ENCODE measurements at regions of chr2 and their contacts with region 1.

Region 1: GRCh38 chr2:175167792-175168563 is at the start of gene ATF2:
- DNase-seq: peak; percentile 74 to 98 (median 96)
- H3K4me3 ChIP-seq: peak within 1 kb of the TSS; percentile 49 to 100 (median 95)
- H3K27ac ChIP-seq: peak within 1 kb of the TSS; percentile 64 to 99 (median 94)
- H3K27me3 ChIP-seq: no peaks in the 10 kb centered on the region
- CTCF ChIP-seq: peak in 21 of 56 donors; percentile 3 to 34 (median 15)
- total RNA-seq, gene ATF2: 70.3 to 129 (median 104) TPM

Region 2: GRCh38 chr2:174529923-174530322 is 638.1 kb before region 1 on chr2:
- intact Hi-C with region 1: no loop called
- DNase-seq: no peak
- H3K4me3 ChIP-seq: no peak overlapping the region
- H3K27ac ChIP-seq: no peak overlapping the region
- H3K27me3 ChIP-seq: no peaks in the 10 kb centered on the region
- CTCF ChIP-seq: no peak

Region 3: GRCh38 chr2:175111200-175111657 is 56.7 kb before region 1 on chr2:
- intact Hi-C with region 1: no loop called
- DNase-seq: no peak
- H3K4me3 ChIP-seq: no peak overlapping the region
- H3K27ac ChIP-seq: no peak overlapping the region
- H3K27me3 ChIP-seq: no peaks in the 10 kb centered on the region
- CTCF ChIP-seq: peak; percentile 49 to 84 (median 77)

Region 4: DNA sequence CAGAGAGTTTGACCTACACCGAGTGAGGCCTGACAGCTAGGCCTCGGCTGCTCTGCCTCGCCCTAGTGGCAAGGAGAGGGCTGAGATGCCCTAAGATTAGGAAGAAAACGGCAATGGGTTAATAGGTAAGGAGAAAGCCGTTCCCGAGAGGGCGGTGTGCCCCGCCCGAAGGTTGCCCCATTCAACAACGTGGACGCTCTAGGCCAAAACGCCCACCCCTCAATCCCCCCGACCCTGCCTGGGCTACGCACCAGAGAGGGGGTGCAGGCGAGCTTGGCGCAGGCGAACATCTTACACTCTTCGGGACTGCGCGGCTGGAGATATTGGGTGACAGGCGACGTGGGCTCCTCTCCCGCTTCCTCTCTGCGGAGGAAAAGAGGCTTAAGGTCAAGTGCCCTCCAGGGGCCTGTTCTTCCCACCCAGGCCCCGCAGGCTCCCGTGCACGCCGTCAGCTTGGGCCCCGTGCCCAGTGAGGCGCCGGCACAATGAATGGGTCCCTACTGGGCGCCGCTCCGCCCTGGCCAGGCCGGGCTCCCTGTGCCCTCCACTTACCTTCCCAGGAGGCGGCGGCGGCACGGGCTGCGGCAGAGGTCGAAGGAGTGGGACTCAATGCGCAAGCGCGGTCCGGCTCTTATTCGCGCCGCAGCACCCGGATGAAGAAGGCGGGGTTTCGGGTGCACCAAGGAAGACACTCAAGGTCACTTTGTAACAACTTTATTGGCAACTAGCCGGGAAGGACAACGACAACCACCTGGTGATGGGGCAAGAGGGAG is 13.3 kb after region 1 on chr2 and contains the start of gene ATP5MC3:
- intact Hi-C with region 1: loop called (anchors 1 to 2 kb)
- DNase-seq: peak; percentile 88 to 95 (median 92)
- H3K4me3 ChIP-seq: peak within 1 kb of the TSS; percentile 67 to 100 (median 94)
- H3K27ac ChIP-seq: peak within 1 kb of the TSS; percentile 37 to 97 (median 89)
- H3K27me3 ChIP-seq: no peaks in the 10 kb centered on the region
- CTCF ChIP-seq: peak in 30 of 56 donors; percentile 3 to 49 (median 22)
- total RNA-seq, gene ATP5MC3: 94.3 to 275 (median 200) TPM

Measured in dorsolateral prefrontal cortex (tissue), 120 donors.